ENCODE measurements at regions of chr6 and their contacts with region 1.

Region 1: GRCh38 chr6:107021446-107022185 is 6.4 kb upstream of the MTRES1 start:
- DNase-seq: no peak
- H3K4me3 Mint-ChIP-seq: no peak overlapping the region
- H3K27ac Mint-ChIP-seq: no peak overlapping the region
- H3K4me1 Mint-ChIP-seq: no peaks in the 10 kb centered on the region
- H3K27me3 Mint-ChIP-seq: no peaks in the 10 kb centered on the region

Region 2: GRCh38 chr6:107304421-107305025 is 282.9 kb after region 1 on chr6:
- CTCF ChIA-PET with region 1: no interaction called
- intact Hi-C with region 1: loop called (anchors 10 kb)
- DNase-seq: peak; percentile 58
- H3K4me3 Mint-ChIP-seq: no peak overlapping the region
- H3K27ac Mint-ChIP-seq: no peak overlapping the region
- H3K4me1 Mint-ChIP-seq: peaks cover 12% of the 10 kb centered on the region
- H3K27me3 Mint-ChIP-seq: no peaks in the 10 kb centered on the region